ENCODE measurements at regions of chr3 and their contacts with region 1.

Region 1: DNA sequence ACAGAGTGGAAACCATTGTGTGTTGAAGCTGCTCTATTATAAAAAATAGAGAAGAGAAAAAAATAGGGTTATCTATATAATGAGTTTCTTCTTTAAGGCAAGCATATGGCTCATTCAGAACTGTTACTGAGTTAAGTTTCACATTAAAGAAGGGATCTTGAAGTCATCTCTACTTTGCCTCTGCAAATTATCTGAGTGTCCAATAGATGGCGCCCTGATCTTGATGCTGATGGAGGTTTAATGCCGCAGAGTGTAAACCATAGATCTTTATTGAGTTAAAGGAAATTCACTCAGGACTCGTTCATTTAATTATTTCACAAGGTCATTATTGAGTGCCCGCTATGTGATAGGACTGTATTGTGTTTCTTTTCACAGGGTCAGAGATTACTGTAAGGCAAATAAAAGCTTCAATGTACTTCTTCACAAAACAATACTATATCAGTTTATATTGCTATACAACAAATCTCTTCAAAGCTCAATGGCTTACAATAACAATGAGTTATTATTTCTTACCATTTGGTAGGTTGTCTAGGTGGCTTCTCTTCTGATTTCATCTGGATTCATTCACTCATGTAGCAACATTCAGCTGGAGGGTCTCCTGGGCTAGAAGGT is 171.4 kb downstream of the NSUN3 start:
- DNase-seq: peak in 1 of 2 experiments; percentile 51
- H3K4me3 ChIP-seq: no peak overlapping the region
- H3K4me3 Mint-ChIP-seq: no peak overlapping the region
- H3K27ac Mint-ChIP-seq: no peak overlapping the region
- H3K4me1 ChIP-seq: no peaks in the 10 kb centered on the region
- H3K4me1 Mint-ChIP-seq: no peaks in the 10 kb centered on the region
- H3K27me3 ChIP-seq: no peaks in the 10 kb centered on the region
- H3K27me3 Mint-ChIP-seq: no peaks in the 10 kb centered on the region
- CTCF ChIP-seq: peak; percentile 70 to 75

Region 2: DNA sequence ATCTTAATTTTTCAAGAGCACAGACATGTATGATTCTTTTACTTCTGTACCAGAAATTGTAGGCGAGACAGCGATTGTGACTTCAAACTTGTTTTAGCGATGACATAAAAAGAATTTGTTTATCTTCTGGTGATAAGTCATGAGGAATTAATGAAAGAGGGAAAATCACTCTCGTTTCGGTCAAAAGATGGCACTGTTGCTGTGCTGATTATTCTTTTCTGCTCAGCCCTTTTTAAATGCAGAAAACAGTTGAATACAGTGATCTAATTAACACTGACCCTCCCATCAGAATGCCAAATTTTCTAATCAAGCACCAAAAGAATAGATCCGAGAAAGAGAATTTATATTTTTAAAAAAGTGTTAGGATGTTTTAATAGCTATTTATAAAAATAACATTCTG is 118.8 kb before region 1 on chr3:
- CTCF ChIA-PET with region 1: no interaction called
- POLR2A ChIA-PET with region 1: no interaction called
- intact Hi-C with region 1: loop called (anchors 5 kb)
- DNase-seq: peak in 1 of 2 experiments; percentile 21
- H3K4me3 ChIP-seq: no peak overlapping the region
- H3K4me3 Mint-ChIP-seq: no peak overlapping the region
- H3K27ac Mint-ChIP-seq: no peak overlapping the region
- H3K4me1 ChIP-seq: no peaks in the 10 kb centered on the region
- H3K4me1 Mint-ChIP-seq: no peaks in the 10 kb centered on the region
- H3K27me3 ChIP-seq: no peaks in the 10 kb centered on the region
- H3K27me3 Mint-ChIP-seq: no peaks in the 10 kb centered on the region
- CTCF ChIP-seq: peak in 1 of 2 experiments; percentile 45

Region 3: GRCh38 chr3:94336046-94336710 is 101.9 kb after region 1 on chr3:
- CTCF ChIA-PET with region 1: no interaction called
- POLR2A ChIA-PET with region 1: no interaction called
- intact Hi-C with region 1: loop called (anchors 1 kb)
- DNase-seq: peak in 1 of 2 experiments; percentile 52
- H3K4me3 ChIP-seq: no peak overlapping the region
- H3K4me3 Mint-ChIP-seq: peak overlapping the region; percentile 2
- H3K27ac Mint-ChIP-seq: peak overlapping the region; percentile 15
- H3K4me1 ChIP-seq: peaks cover 7% of the 10 kb centered on the region; the same call in 1 of the 2 replicates
- H3K4me1 Mint-ChIP-seq: peaks cover 28% of the 10 kb centered on the region
- H3K27me3 ChIP-seq: no peaks in the 10 kb centered on the region
- H3K27me3 Mint-ChIP-seq: no peaks in the 10 kb centered on the region
- CTCF ChIP-seq: peak; percentile 41 to 62